CD8-positive, alpha-beta memory T cell (primary cell): ENCODE measurements at regions of chr1 and their contacts with region 1.

Region 1: DNA sequence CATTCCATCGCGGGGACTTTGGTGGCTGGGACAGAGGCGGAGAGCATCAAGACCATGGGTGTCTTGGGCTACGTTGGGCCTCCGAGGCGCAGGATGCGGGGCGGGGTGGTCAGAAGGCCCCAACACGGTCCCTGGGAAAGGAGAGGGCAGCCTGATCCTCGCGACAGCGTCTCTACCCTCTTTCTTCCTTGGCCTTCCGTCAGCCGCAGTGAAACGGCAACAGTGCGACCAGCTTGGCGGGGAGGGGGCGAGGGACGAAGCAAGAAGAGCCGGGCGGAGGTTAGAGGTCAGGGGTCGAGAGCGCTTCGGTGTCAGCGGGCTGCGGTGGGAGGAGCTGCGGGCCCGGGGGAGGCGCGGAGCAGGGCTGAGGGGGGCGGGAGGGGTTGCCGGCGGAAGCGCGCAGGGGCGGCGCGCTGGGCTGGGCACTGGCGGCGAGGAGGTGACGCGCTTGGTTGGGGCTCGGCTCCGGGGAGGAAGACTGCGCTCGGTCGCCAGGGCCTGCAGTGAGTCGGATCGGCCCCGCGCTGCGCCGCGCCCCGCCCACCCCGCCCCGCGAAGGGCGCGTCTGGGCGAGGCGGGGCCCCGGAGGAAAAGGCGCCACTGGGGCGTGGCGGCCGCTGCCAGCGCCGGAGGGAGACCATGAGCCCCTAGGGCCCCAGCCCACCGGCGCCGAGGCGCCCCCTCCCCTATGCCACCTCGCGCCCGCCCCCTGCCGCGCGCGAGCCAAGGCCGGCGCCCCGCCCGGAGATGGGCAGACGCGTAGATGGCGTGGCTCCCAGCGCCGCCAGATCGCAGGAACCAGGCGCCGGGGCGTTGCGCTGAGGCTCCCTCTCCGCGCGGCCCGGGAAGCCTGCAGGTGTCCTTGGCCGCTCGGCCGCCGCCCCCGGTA is at the start of gene KCNC4:
- DNase-seq: peak; percentile 88 to 95 (median 90)
- H3K4me3 ChIP-seq: peak within 1 kb of the TSS; percentile 68
- H3K4me3 Mint-ChIP-seq: peak within 1 kb of the TSS; percentile 82 to 94 (median 89)
- H3K27ac ChIP-seq: peak within 1 kb of the TSS; percentile 66
- H3K27ac Mint-ChIP-seq: peak within 1 kb of the TSS; percentile 85 to 98 (median 95)
- H3K4me1 ChIP-seq: peaks cover 29% of the 10 kb centered on the region
- H3K4me1 Mint-ChIP-seq: peaks cover 34 to 61% (median 53%) of the 10 kb centered on the region in 3 donors
- H3K27me3 ChIP-seq: no peaks in the 10 kb centered on the region
- H3K27me3 Mint-ChIP-seq: peaks cover 0 to 5% of the 10 kb centered on the region in 2 donors
- total RNA-seq, gene KCNC4: 6.4 to 8.4 TPM

Region 2: GRCh38 chr1:110130113-110130596 is 79.8 kb before region 1 on chr1:
- CTCF ChIA-PET with region 1: no interaction called
- POLR2A ChIA-PET with region 1: no interaction called
- DNase-seq: no peak
- H3K4me3 ChIP-seq: no peak overlapping the region
- H3K4me3 Mint-ChIP-seq: no peak overlapping the region
- H3K27ac ChIP-seq: no peak overlapping the region
- H3K27ac Mint-ChIP-seq: no peak overlapping the region
- H3K4me1 ChIP-seq: no peaks in the 10 kb centered on the region
- H3K4me1 Mint-ChIP-seq: no peaks in the 10 kb centered on the region
- H3K27me3 ChIP-seq: peaks cover 8% of the 10 kb centered on the region
- H3K27me3 Mint-ChIP-seq: peaks cover 26 to 64% of the 10 kb centered on the region in 2 donors

Region 3: DNA sequence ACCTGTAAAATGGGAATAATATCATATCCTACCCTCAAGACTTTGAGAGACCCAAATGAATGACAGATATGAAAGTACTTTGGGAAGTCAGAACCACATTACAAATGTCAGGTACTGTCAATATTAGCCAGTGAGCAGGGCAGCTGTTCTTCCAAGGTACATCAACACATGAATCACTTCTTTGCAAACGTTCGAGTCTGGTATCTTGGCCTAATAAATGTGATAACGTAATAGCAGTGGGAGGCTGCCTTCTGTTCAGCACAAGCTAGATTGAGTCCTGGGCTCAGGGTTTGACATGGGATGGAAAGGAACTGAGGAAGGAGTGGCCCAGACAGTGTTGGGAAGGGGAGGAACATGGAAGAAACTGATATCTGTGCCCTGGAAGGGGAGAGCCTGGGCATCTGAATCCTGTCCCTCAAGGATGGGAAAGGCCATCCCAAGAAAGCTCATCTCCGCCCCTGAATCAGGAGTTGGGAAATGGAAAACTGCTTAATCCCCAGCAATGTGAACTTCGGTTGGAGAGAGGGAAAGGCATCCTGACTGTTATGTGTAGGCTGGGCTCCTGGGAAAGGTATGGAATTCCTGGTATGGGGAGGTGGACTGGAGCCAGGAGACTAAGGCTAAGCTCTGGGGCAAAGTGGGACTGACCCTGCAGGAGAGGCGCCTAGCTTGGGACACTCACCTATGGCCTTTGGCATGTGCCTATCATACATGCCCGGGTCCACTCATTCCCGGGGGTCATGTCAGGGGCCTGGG is 14.5 kb after region 1 on chr1:
- CTCF ChIA-PET with region 1: interaction called, 12 read pairs
- POLR2A ChIA-PET with region 1: no interaction called
- DNase-seq: no peak
- H3K4me3 ChIP-seq: no peak overlapping the region
- H3K4me3 Mint-ChIP-seq: no peak overlapping the region
- H3K27ac ChIP-seq: no peak overlapping the region
- H3K27ac Mint-ChIP-seq: peak overlapping the region in 3 of 8 donors; percentile 15 to 83 (median 15)
- H3K4me1 ChIP-seq: no peaks in the 10 kb centered on the region
- H3K4me1 Mint-ChIP-seq: no peaks in the 10 kb centered on the region
- H3K27me3 ChIP-seq: no peaks in the 10 kb centered on the region
- H3K27me3 Mint-ChIP-seq: peaks cover 0 to 2% of the 10 kb centered on the region in 2 donors

Region 4: GRCh38 chr1:110312188-110313121 is 102.5 kb after region 1 on chr1:
- CTCF ChIA-PET with region 1: interaction called, 438 read pairs
- POLR2A ChIA-PET with region 1: interaction called, 12 read pairs
- DNase-seq: peak; percentile 57 to 82 (median 62)
- H3K4me3 ChIP-seq: no peak overlapping the region
- H3K4me3 Mint-ChIP-seq: peak overlapping the region in 1 of 7 donors; percentile 54
- H3K27ac ChIP-seq: no peak overlapping the region
- H3K27ac Mint-ChIP-seq: no peak overlapping the region
- H3K4me1 ChIP-seq: no peaks in the 10 kb centered on the region
- H3K4me1 Mint-ChIP-seq: peaks cover 0 to 2% (median 0%) of the 10 kb centered on the region in 3 donors
- H3K27me3 ChIP-seq: no peaks in the 10 kb centered on the region
- H3K27me3 Mint-ChIP-seq: peaks cover 0 to 2% of the 10 kb centered on the region in 2 donors

Region 5: DNA sequence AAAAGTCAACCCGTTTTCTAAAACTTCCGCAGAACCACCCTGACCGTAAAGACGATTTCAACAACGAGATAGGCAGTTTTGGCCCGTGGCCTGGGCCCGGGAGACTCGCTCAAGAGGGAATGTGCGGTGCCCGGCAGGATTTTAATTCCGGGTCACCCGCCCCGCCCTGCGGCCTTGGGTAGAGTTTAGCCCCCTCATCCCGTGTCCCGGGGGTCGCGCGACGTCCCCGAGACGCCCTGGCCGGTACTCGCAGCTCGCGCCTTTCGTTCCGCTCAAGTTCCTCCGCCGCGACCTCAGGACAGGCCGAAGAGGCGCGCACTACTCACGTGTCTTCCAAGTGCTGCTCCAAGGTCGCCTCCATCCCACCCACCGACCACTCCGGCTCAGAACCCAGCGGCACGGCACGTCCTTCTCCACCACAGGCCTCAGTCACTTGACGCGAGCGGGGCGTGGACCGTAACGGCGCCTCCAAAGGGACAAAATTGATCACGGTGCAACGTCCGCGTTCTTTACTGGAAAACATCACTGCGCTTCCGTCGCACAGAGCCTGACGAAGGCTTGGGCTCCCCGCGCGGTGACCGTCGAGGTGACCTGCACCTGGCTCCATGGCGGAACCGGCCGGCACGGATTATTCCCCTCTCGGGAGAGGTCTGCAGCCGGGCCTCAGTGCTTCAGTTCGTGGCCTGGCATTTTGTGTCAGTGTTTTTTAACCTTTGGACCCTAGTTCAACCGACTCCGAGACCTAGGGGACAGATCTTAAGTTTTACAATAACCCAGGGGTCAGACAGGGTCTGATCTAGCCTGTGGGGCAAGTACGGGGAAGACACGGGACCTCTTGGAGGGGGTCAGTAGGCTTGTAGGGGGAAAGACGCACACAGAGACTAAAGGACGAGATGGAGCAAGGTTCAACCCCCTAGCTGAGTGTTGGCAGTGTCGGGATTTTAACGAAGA is 197.6 kb after region 1 on chr1 and contains the start of gene LAMTOR5:
- CTCF ChIA-PET with region 1: interaction called, 39 read pairs
- POLR2A ChIA-PET with region 1: interaction called, 6 read pairs
- DNase-seq: peak; percentile 85 to 93 (median 87)
- H3K4me3 ChIP-seq: peak within 1 kb of the TSS; percentile 100
- H3K4me3 Mint-ChIP-seq: peak within 1 kb of the TSS; percentile 95 to 100 (median 99)
- H3K27ac ChIP-seq: peak within 1 kb of the TSS; percentile 97
- H3K27ac Mint-ChIP-seq: peak within 1 kb of the TSS; percentile 90 to 100 (median 99)
- H3K4me1 ChIP-seq: peaks cover 22% of the 10 kb centered on the region
- H3K4me1 Mint-ChIP-seq: peaks cover 24 to 33% (median 31%) of the 10 kb centered on the region in 3 donors
- H3K27me3 ChIP-seq: no peaks in the 10 kb centered on the region
- H3K27me3 Mint-ChIP-seq: no peaks in the 10 kb centered on the region
- total RNA-seq, gene LAMTOR5: 148 to 157 TPM

Region 6: GRCh38 chr1:110495926-110496600 is 286.1 kb after region 1 on chr1:
- CTCF ChIA-PET with region 1: interaction called, 20 read pairs
- POLR2A ChIA-PET with region 1: no interaction called
- DNase-seq: peak; percentile 48 to 80 (median 59)
- H3K4me3 ChIP-seq: no peak overlapping the region
- H3K4me3 Mint-ChIP-seq: no peak overlapping the region
- H3K27ac ChIP-seq: no peak overlapping the region
- H3K27ac Mint-ChIP-seq: no peak overlapping the region
- H3K4me1 ChIP-seq: no peaks in the 10 kb centered on the region
- H3K4me1 Mint-ChIP-seq: no peaks in the 10 kb centered on the region
- H3K27me3 ChIP-seq: no peaks in the 10 kb centered on the region
- H3K27me3 Mint-ChIP-seq: peaks cover 0 to 9% of the 10 kb centered on the region in 2 donors